ENCODE measurements at regions of chr3 and their contacts with region 1.

Region 1: DNA sequence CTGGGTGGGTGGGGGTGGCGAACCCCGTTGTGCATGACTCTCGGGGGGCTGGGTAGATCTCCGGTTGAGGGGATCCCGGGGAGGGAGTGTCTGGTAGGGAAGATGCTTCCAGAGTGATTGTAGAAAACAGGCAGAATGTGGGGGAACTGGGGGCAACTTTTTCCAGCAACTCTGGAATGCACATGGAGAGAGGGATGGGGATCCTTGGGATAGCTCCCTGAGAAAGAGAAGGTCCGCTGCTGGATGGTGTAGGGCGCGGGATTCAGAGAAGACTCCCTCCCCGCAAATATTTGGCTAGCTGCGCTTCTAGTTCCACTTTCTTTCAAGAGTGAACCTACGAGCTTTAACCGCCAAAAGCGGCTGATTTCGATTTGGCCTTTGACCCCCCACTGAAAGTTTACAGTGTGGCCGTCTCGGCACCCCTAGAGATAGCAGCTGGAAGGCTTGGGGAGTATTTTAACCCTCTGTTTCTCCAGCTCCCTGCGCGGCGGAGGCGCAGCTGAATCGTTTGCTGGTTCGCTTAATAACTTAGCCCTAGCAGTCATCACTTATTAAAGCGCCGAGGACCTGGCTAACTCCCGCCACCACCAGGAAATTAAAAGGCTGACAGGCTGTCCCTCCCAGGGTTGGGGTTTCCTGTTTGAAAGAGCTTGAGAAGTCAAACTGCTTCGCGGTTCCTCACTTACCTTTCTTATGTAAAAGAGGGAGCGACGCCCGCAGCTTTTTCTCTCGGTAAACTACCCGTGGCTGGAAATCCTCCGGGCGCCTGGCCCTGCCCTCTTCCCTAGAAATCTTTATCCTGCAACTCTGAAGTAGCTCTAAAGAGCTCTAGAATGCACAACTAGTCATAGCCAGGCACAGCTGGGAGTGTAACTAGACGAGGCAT is 1.2 kb downstream of the PHLDB2 start:
- DNase-seq: peak; percentile 93
- H3K4me3 ChIP-seq: peak overlapping the region; percentile 69 to 97 (median 88)
- H3K27ac ChIP-seq: peak overlapping the region; percentile 95 to 99 (median 99)
- H3K4me1 ChIP-seq: peaks cover 0 to 61% (median 43%) of the 10 kb centered on the region in 4 donors
- H3K27me3 ChIP-seq: no peaks in the 10 kb centered on the region
- CTCF ChIP-seq: peak; percentile 52 to 64 (median 54)
- EP300 ChIP-seq: no peak
- POLR2A ChIP-seq: peak; percentile 38 to 43

Region 2: GRCh38 chr3:111717601-111718000 is 142.6 kb before region 1 on chr3:
- intact Hi-C with region 1: loop called (anchors 2 kb)
- DNase-seq: peak; percentile 91
- H3K4me3 ChIP-seq: no peak overlapping the region
- H3K27ac ChIP-seq: peak overlapping the region; percentile 6 to 67 (median 38)
- H3K4me1 ChIP-seq: peaks cover 0 to 19% (median 9%) of the 10 kb centered on the region in 4 donors
- H3K27me3 ChIP-seq: no peaks in the 10 kb centered on the region
- CTCF ChIP-seq: peak; percentile 86 to 97 (median 94)
- EP300 ChIP-seq: no peak
- POLR2A ChIP-seq: no peak

Region 3: GRCh38 chr3:111761309-111761831 is 98.8 kb before region 1 on chr3:
- intact Hi-C with region 1: loop called (anchors 10 kb)
- DNase-seq: no peak
- H3K4me3 ChIP-seq: no peak overlapping the region
- H3K27ac ChIP-seq: peak overlapping the region; percentile 84 to 90 (median 88)
- H3K4me1 ChIP-seq: peaks cover 0 to 60% (median 55%) of the 10 kb centered on the region in 4 donors
- H3K27me3 ChIP-seq: no peaks in the 10 kb centered on the region
- CTCF ChIP-seq: no peak
- EP300 ChIP-seq: peak in 1 of 4 donors; percentile 5
- POLR2A ChIP-seq: no peak

Region 4: GRCh38 chr3:111904376-111905241 is 44.4 kb after region 1 on chr3:
- intact Hi-C with region 1: loop called (anchors 5 kb)
- DNase-seq: no peak
- H3K4me3 ChIP-seq: no peak overlapping the region
- H3K27ac ChIP-seq: peak overlapping the region; percentile 57 to 70 (median 67)
- H3K4me1 ChIP-seq: peaks cover 0 to 60% (median 31%) of the 10 kb centered on the region in 4 donors
- H3K27me3 ChIP-seq: no peaks in the 10 kb centered on the region
- CTCF ChIP-seq: no peak
- EP300 ChIP-seq: peak in 1 of 4 donors; percentile 50
- POLR2A ChIP-seq: no peak

Region 5: GRCh38 chr3:111967651-111968274 is 107.5 kb after region 1 on chr3:
- intact Hi-C with region 1: loop called (anchors 2 kb)
- DNase-seq: peak; percentile 92
- H3K4me3 ChIP-seq: no peak overlapping the region
- H3K27ac ChIP-seq: peak overlapping the region; percentile 44 to 54 (median 51)
- H3K4me1 ChIP-seq: peaks cover 0 to 32% (median 19%) of the 10 kb centered on the region in 4 donors
- H3K27me3 ChIP-seq: no peaks in the 10 kb centered on the region
- CTCF ChIP-seq: peak; percentile 86 to 88 (median 86)
- EP300 ChIP-seq: no peak
- POLR2A ChIP-seq: no peak

Measured in sigmoid colon (tissue), 7 donors.